ENCODE measurements at regions of chr5 and their contacts with region 1.

Region 1: DNA sequence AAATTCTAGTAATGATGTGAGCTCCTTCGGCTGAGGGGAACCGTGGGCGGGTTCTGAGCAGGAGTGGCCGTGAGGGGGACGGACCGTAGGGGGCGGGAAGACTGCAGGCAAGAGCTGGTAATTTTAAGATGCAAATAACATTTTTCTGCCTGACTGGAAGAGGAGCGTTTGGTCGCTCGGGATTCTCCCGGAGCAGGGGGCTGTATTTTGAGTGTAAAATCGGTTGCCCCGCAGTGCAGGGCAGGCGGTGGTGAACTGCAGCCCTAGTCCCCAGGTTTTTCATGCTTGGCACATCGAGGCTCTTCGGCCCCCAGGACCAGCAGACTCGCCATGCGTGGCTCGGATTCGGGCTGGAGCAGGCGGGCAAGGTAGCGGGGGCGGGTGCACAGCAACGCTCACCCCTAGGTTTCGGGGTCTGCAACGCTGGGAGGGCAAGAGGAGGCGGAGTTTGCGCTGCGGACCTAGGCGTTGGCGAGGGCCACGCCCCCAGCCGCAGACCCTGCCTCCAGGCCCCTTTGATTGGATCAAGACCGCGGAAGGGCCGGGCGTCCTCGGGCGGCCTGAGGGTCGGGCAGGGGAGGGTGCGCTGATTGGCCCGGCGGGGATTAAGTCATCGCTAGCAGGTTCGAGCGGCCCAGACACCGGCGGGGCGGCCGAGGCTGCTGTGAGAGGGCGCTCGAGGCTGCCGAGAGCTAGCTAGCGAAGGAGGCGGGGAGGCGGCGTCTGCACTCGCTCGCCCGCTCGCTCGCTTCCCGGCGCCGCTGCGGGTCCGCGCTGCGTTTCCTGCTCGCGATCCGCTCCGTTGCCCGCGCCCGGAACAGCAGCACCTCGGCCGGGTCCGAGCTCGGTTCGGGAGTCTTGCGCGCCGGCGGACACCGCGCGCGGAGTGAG is at the start of gene ARHGAP26:
- DNase-seq: peak; percentile 96
- H3K4me3 Mint-ChIP-seq: peak within 1 kb of the TSS; percentile 92
- H3K27ac Mint-ChIP-seq: peak within 1 kb of the TSS; percentile 78
- H3K4me1 Mint-ChIP-seq: peaks cover 43% of the 10 kb centered on the region
- H3K27me3 Mint-ChIP-seq: no peaks in the 10 kb centered on the region
- total RNA-seq, gene ARHGAP26: 16.4 to 16.9 TPM

Region 2: GRCh38 chr5:142748568-142749249 is 21.3 kb before region 1 on chr5:
- CTCF ChIA-PET with region 1: interaction called, 34 read pairs
- POLR2A ChIA-PET with region 1: no interaction called
- intact Hi-C with region 1: no loop called
- DNase-seq: peak; percentile 72
- H3K4me3 Mint-ChIP-seq: no peak overlapping the region
- H3K27ac Mint-ChIP-seq: peak overlapping the region; percentile 57
- H3K4me1 Mint-ChIP-seq: peaks cover 12% of the 10 kb centered on the region
- H3K27me3 Mint-ChIP-seq: peaks cover 2% of the 10 kb centered on the region

Region 3: GRCh38 chr5:142800776-142801494 is 30.9 kb after region 1 on chr5:
- CTCF ChIA-PET with region 1: interaction called, 7 read pairs
- POLR2A ChIA-PET with region 1: interaction called, 6 read pairs
- intact Hi-C with region 1: loop called (anchors 1 kb)
- DNase-seq: peak; percentile 71
- H3K4me3 Mint-ChIP-seq: peak overlapping the region; percentile 66
- H3K27ac Mint-ChIP-seq: peak overlapping the region; percentile 91
- H3K4me1 Mint-ChIP-seq: peaks cover 52% of the 10 kb centered on the region
- H3K27me3 Mint-ChIP-seq: no peaks in the 10 kb centered on the region

Region 4: GRCh38 chr5:142826741-142827732 is 57.1 kb after region 1 on chr5:
- CTCF ChIA-PET with region 1: interaction called, 29 read pairs
- POLR2A ChIA-PET with region 1: interaction called, 20 read pairs
- intact Hi-C with region 1: loop called (anchors 1 kb)
- DNase-seq: peak; percentile 73
- H3K4me3 Mint-ChIP-seq: no peak overlapping the region
- H3K27ac Mint-ChIP-seq: peak overlapping the region; percentile 55
- H3K4me1 Mint-ChIP-seq: peaks cover 64% of the 10 kb centered on the region
- H3K27me3 Mint-ChIP-seq: no peaks in the 10 kb centered on the region

Region 5: DNA sequence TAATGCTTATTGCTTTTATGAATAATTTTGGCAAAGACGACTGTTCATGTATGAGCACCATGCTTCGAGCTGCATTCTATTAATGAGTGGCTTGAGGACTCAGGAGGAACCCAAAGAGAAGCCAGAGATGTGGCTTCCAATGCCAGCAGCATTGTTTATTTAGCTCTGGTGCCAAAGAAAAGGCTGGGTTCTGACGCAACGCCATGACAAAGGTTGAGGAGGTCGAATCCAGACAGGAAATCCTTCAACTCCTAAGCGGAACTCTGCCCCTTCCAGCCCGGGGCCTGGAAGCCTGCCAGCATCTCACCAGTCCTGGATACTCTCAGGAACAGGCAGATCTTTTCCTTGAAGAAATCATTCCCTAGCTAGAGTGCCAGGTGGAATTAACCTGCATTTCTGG is 104.6 kb after region 1 on chr5:
- CTCF ChIA-PET with region 1: interaction called, 35 read pairs
- POLR2A ChIA-PET with region 1: no interaction called
- intact Hi-C with region 1: no loop called
- DNase-seq: no peak
- H3K4me3 Mint-ChIP-seq: no peak overlapping the region
- H3K27ac Mint-ChIP-seq: no peak overlapping the region
- H3K4me1 Mint-ChIP-seq: no peaks in the 10 kb centered on the region
- H3K27me3 Mint-ChIP-seq: no peaks in the 10 kb centered on the region

Region 6: GRCh38 chr5:143435210-143435657 is 665.2 kb after region 1 on chr5:
- CTCF ChIA-PET with region 1: interaction called, 3 read pairs
- POLR2A ChIA-PET with region 1: no interaction called
- intact Hi-C with region 1: loop called (anchors 10 kb)
- DNase-seq: peak; percentile 51
- H3K4me3 Mint-ChIP-seq: peak overlapping the region; percentile 81
- H3K27ac Mint-ChIP-seq: peak overlapping the region; percentile 87
- H3K4me1 Mint-ChIP-seq: peaks cover 68% of the 10 kb centered on the region
- H3K27me3 Mint-ChIP-seq: no peaks in the 10 kb centered on the region